ENCODE measurements at regions of chr15 and their contacts with region 1.

Region 1: DNA sequence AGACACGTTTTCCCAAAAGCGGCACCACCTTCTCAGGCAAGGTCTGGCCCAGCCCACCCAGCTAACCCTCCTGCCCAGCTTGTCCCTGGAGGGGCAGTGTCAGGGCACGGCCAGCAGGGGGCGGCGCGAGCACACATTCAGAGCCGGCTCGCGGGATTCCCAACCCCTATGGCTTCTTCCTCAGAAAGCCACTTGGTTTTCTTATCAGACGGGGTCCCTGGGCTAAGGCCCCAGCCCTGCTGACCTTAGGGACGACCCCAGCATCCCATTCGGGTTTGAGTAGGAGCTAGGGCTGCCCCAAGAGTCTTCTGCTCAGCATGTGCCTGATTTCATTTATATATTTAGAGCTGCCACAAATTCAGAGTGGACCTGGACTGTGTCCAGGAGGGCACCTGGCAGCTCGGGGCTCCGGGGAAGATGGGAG is 14.5 kb downstream of the RLBP1 start:
- DNase-seq: peak; percentile 80
- H3K4me3 Mint-ChIP-seq: peak overlapping the region; percentile 38
- H3K27ac Mint-ChIP-seq: no peak overlapping the region
- H3K4me1 Mint-ChIP-seq: no peaks in the 10 kb centered on the region
- H3K27me3 Mint-ChIP-seq: no peaks in the 10 kb centered on the region
- CTCF ChIP-seq: peak; percentile 95

Region 2: GRCh38 chr15:89003865-89004725 is 202.8 kb before region 1 on chr15:
- CTCF ChIA-PET with region 1: no interaction called
- POLR2A ChIA-PET with region 1: no interaction called
- intact Hi-C with region 1: no loop called
- DNase-seq: peak; percentile 27
- H3K4me3 Mint-ChIP-seq: no peak overlapping the region
- H3K27ac Mint-ChIP-seq: no peak overlapping the region
- H3K4me1 Mint-ChIP-seq: peaks cover 5% of the 10 kb centered on the region
- H3K27me3 Mint-ChIP-seq: peaks cover 12% of the 10 kb centered on the region
- CTCF ChIP-seq: peak; percentile 9

Region 3: GRCh38 chr15:89112341-89112971 is 94.5 kb before region 1 on chr15:
- CTCF ChIA-PET with region 1: no interaction called
- POLR2A ChIA-PET with region 1: no interaction called
- intact Hi-C with region 1: no loop called
- DNase-seq: peak; percentile 49
- H3K4me3 Mint-ChIP-seq: no peak overlapping the region
- H3K27ac Mint-ChIP-seq: peak overlapping the region; percentile 69
- H3K4me1 Mint-ChIP-seq: peaks cover 20% of the 10 kb centered on the region
- H3K27me3 Mint-ChIP-seq: no peaks in the 10 kb centered on the region
- CTCF ChIP-seq: no peak

Region 4: GRCh38 chr15:89221543-89221942 is 14.6 kb after region 1 on chr15 and contains the start of gene RLBP1:
- CTCF ChIA-PET with region 1: interaction called, 63 read pairs
- POLR2A ChIA-PET with region 1: no interaction called
- intact Hi-C with region 1: no loop called
- DNase-seq: peak; percentile 49
- H3K4me3 Mint-ChIP-seq: no peak within 1 kb of the TSS
- H3K27ac Mint-ChIP-seq: no peak within 1 kb of the TSS
- H3K4me1 Mint-ChIP-seq: no peaks in the 10 kb centered on the region
- H3K27me3 Mint-ChIP-seq: no peaks in the 10 kb centered on the region
- CTCF ChIP-seq: no peak
- total RNA-seq, gene RLBP1: not detected in 2 replicates

Region 5: DNA sequence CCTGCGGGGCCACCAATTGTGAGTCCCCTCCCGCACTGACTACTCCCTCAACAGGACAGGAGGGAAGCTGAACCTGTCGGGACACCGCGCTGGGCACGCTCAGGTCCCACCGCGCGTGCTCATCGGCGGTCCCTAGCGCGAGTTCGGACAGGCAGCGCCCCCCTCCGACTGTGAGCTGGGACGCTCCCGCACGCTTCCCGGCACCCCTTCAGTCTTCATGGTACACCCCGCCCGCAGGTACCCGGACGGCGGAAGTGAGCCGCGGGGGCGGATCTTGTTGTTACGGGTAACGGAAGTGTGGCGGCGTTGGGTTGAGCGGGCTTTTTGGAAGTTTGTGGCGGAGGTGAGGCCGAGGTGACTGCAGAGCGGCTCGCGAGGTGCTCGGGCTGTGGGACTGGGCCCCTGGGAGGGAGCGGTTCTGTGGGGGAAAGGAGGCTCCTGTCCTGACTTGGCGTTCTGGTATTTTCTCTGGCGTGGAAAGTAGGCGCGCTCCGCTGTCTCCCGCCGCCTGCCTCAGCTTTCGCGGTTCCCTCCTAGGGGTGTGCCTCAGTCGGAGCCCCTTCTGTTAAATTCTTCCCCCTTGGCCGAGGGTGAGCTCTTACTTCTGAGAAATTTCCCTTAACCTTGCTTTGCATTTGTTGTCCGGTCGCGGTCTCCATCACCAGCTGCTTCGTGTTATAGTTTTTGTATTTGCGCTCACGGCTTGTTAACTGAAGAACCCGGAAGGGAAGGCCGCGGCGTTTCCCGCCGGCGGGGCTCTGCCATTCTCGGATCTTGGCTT is 37.0 kb after region 1 on chr15 and contains the start of gene FANCI:
- CTCF ChIA-PET with region 1: interaction called, 31 read pairs
- POLR2A ChIA-PET with region 1: interaction called, 3 read pairs
- intact Hi-C with region 1: loop called (anchors 1 kb)
- DNase-seq: peak; percentile 94
- H3K4me3 Mint-ChIP-seq: peak within 1 kb of the TSS; percentile 95
- H3K27ac Mint-ChIP-seq: peak within 1 kb of the TSS; percentile 93
- H3K4me1 Mint-ChIP-seq: peaks cover 31% of the 10 kb centered on the region
- H3K27me3 Mint-ChIP-seq: peaks cover 6% of the 10 kb centered on the region
- CTCF ChIP-seq: no peak
- total RNA-seq, gene FANCI: 24.0 and 34.0 TPM in 2 replicates

Region 6: GRCh38 chr15:89299896-89300295 is 93.0 kb after region 1 on chr15:
- CTCF ChIA-PET with region 1: interaction called, 78 read pairs
- POLR2A ChIA-PET with region 1: interaction called, 3 read pairs
- intact Hi-C with region 1: loop called (anchors 1 kb)
- DNase-seq: peak; percentile 27
- H3K4me3 Mint-ChIP-seq: no peak overlapping the region
- H3K27ac Mint-ChIP-seq: no peak overlapping the region
- H3K4me1 Mint-ChIP-seq: no peaks in the 10 kb centered on the region
- H3K27me3 Mint-ChIP-seq: no peaks in the 10 kb centered on the region
- CTCF ChIP-seq: no peak

Region 7: DNA sequence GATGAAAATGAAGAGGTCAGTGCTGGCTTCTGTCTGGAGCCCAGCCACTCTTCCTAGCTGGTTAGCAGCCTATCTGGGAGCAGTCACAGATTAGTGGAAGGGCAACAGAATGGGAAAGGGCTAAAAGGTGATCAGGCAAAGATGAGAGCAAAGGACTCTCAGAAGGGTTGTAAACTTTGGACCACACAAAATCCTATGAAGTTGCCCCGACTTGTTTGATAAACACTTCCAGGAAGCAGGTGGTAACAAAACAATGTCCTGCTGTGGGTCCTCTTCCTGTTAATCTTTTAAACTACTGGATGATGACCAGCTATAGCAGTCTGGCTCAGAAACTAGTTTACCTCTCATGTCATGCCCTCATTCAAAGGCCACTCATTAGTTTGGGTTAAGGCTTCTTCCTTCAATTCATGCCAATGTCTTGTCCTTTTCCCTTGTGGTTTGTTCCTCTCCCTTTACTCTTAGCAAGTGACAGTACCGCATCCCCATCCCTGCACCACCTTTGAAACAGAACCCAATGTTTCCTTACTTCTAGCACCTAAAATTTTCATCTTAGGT is 108.5 kb after region 1 on chr15:
- CTCF ChIA-PET with region 1: interaction called, 10 read pairs
- POLR2A ChIA-PET with region 1: no interaction called
- intact Hi-C with region 1: no loop called
- DNase-seq: no peak
- H3K4me3 Mint-ChIP-seq: no peak overlapping the region
- H3K27ac Mint-ChIP-seq: no peak overlapping the region
- H3K4me1 Mint-ChIP-seq: no peaks in the 10 kb centered on the region
- H3K27me3 Mint-ChIP-seq: no peaks in the 10 kb centered on the region
- CTCF ChIP-seq: no peak

Measured in MCF 10A (cell line).